ENCODE measurements at regions of chr9 and their contacts with region 1.

Region 1: GRCh38 chr9:77456829-77457437 is 191.2 kb downstream of the GNA14 start:
- DNase-seq: peak; percentile 90 to 93
- H3K4me3 ChIP-seq: no peak overlapping the region
- H3K27ac ChIP-seq: no peak overlapping the region
- H3K4me1 ChIP-seq: peaks cover 0 to 12% (median 5%) of the 10 kb centered on the region in 4 donors
- H3K27me3 ChIP-seq: no peaks in the 10 kb centered on the region
- CTCF ChIP-seq: peak in 6 of 7 experiments; percentile 67 to 93 (median 82)
- EP300 ChIP-seq: no peak
- POLR2A ChIP-seq: no peak

Region 2: DNA sequence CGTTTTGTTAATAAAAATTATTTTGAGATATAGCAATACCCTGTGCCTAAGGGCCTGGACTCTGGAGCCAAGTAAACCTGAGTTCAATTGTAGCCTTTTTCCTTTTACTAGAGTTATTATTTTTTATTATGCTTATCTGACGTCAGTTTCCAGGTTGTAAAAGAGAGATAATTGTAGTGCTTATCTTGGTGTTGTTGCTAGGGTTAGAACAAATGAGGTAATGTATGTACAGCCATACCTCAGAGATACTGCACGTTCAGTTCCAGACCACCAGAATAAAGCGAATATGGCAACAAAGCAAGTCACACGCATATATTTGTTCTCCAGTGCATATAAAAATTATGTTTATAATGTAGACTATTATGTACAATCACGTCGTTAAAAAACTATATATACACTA is 64.6 kb before region 1 on chr9:
- intact Hi-C with region 1: no loop called
- DNase-seq: peak in 1 of 2 donors; percentile 6
- H3K4me3 ChIP-seq: no peak overlapping the region
- H3K27ac ChIP-seq: no peak overlapping the region
- H3K4me1 ChIP-seq: no peaks in the 10 kb centered on the region
- H3K27me3 ChIP-seq: no peaks in the 10 kb centered on the region
- CTCF ChIP-seq: no peak
- EP300 ChIP-seq: no peak
- POLR2A ChIP-seq: no peak

Region 3: DNA sequence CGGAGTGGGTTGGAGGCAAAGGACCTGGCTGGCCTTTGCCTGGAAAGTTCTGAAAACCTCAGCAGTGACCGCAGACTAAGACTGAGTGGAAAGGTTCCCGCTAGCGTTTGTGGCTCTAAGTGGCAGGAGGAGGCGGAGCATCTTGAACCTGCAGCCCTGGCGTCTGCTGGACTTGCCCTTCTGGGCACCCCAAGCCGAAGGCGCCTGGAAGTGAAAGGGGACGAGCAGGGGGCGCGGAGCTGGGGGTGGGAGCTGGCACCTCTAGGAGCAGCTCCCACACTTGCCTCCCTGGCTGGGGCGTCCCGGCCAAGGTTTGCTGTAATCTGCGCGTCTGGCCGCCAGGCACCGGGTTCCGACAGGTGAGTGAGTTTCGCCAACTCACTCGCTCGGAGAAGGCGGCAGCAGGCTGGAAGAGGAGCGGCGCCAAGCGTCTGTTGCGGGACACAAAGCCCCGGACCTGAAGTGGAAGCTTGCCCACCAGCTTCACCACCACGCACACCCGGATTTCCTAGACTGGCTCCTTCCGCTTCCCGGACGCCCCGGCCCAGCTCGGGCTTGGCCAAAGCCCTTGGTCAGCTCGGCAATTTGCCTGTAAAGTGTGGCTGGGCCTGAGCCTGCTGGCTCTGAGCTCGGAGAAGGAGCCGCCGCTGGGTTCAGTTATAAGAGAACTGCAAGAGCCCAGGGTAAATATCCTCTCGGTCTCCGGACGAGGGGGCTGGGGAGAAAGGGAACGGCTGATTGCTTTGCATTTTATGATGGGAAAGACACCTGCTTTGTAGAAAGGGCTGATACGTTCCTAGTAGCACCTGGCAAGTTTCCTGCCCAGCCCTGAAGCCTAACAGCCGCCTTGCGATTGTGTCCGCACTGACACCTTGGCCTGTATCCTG is 191.5 kb after region 1 on chr9 and contains the start of gene GNA14:
- intact Hi-C with region 1: loop called (anchors 10 kb)
- DNase-seq: peak; percentile 66 to 80
- H3K4me3 ChIP-seq: peak within 1 kb of the TSS; percentile 52 to 70 (median 60)
- H3K27ac ChIP-seq: peak within 1 kb of the TSS; percentile 38 to 76 (median 61)
- H3K4me1 ChIP-seq: peaks cover 9 to 31% (median 26%) of the 10 kb centered on the region in 4 donors
- H3K27me3 ChIP-seq: peaks cover 0 to 19% (median 13%) of the 10 kb centered on the region in 3 donors
- CTCF ChIP-seq: no peak
- EP300 ChIP-seq: no peak
- POLR2A ChIP-seq: no peak
- total RNA-seq, gene GNA14: 1.3 to 12.5 (median 7.7) TPM in 4 of 5 donors, not detected in the other

Region 4: GRCh38 chr9:77876091-77876490 is 419.2 kb after region 1 on chr9:
- intact Hi-C with region 1: no loop called
- DNase-seq: peak in 1 of 2 donors; percentile 38
- H3K4me3 ChIP-seq: no peak overlapping the region
- H3K27ac ChIP-seq: no peak overlapping the region
- H3K4me1 ChIP-seq: peaks cover 8 to 49% (median 32%) of the 10 kb centered on the region in 4 donors
- H3K27me3 ChIP-seq: no peaks in the 10 kb centered on the region
- CTCF ChIP-seq: no peak
- EP300 ChIP-seq: no peak
- POLR2A ChIP-seq: no peak